Posterior vena cava (tissue), 2 donors: ENCODE measurements at regions of chr21 and their contacts with region 1.

Region 1: GRCh38 chr21:34252751-34253150 is 111.1 kb upstream of the KCNE2 start:
- DNase-seq: no peak

Region 2: GRCh38 chr21:34202553-34203372 is 50.0 kb before region 1 on chr21:
- intact Hi-C with region 1: no loop called
- DNase-seq: peak; percentile 84

Region 3: DNA sequence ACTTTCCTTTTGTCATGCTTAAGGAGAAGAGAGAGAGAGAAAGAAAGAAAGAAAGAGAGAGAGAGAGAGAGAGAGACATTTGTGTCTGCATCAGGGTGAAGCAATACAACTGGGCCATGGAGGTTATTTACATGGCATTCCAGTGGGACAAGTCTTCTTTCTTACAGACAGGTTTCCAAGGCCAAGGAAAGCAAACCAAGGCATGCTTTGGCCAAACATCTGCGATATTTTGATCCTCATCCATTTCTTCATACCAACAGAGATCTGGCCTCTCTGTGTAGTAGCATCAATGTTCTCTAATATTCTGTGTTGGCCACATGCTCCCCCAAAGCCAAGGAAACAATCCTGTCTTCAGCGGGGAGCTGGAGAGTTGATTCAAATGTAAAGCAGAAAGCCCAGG is 1515.4 kb after region 1 on chr21:
- intact Hi-C with region 1: loop called in 1 of 2 experiments (anchors 10 kb)
- DNase-seq: no peak